ENCODE measurements at regions of chr1 and their contacts with region 1.

Region 1: DNA sequence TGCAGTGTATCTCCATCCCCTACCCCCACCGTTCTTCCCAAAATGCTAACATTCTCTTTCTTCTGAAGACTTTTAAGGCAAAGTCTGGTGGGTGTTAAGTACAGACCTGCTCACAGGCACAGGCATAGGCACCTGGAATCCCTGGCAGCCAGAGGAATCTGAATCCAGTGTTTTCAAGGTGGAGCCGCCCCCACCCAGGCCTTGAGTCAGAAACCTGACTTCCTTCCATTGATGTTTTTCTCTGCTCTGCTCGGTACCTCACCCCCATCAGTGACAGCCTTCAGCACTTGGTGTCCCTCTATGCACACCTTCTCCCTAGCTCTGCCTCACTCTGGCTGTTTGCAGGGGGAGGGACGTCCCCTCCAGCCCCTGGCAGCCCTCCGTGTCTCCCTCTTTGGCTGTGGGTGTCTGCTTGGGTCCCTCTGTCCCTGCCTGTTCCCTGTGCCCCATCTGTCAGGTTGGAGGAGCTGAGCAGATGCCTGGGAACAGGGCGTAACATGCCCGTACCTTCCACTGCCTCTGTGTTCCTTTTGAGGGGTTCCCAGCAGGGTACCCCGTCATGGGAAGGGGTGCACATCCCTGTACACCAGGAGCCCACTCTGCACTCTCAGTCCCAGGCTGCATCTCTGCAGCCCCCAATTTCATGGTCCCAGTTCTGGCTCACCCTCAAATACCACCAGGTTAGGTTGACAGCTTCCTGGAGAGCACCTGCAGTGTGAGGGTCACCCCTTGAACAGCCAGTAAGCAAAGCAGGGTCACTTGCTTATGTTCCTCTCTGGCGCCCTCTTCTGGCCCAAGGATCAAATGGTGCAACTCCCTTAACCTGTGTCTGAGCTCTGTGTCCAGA is 6.7 kb downstream of the NCDN start:
- DNase-seq: peak; percentile 61 to 87 (median 83)
- ATAC-seq: peak; percentile 74
- H3K4me3 ChIP-seq: no peak overlapping the region
- H3K4me3 Mint-ChIP-seq: no peak overlapping the region
- H3K27ac ChIP-seq: no peak overlapping the region
- H3K27ac Mint-ChIP-seq: no peak overlapping the region
- H3K4me1 ChIP-seq: no peaks in the 10 kb centered on the region
- H3K4me1 Mint-ChIP-seq: peaks cover 32% of the 10 kb centered on the region
- H3K27me3 ChIP-seq: no peaks in the 10 kb centered on the region
- H3K27me3 Mint-ChIP-seq: no peaks in the 10 kb centered on the region
- CTCF ChIP-seq: peak; percentile 72

Region 2: GRCh38 chr1:35544978-35545377 is 19.3 kb before region 1 on chr1:
- CTCF ChIA-PET with region 1: interaction called, 12 read pairs
- POLR2A ChIA-PET with region 1: no interaction called
- intact Hi-C with region 1: no loop called
- DNase-seq: peak in 7 of 9 experiments; percentile 37 to 83 (median 70)
- ATAC-seq: peak; percentile 88
- H3K4me3 ChIP-seq: no peak overlapping the region
- H3K4me3 Mint-ChIP-seq: no peak overlapping the region
- H3K27ac ChIP-seq: no peak overlapping the region
- H3K27ac Mint-ChIP-seq: peak overlapping the region; percentile 20
- H3K4me1 ChIP-seq: peaks cover 35% of the 10 kb centered on the region
- H3K4me1 Mint-ChIP-seq: peaks cover 77% of the 10 kb centered on the region
- H3K27me3 ChIP-seq: no peaks in the 10 kb centered on the region
- H3K27me3 Mint-ChIP-seq: no peaks in the 10 kb centered on the region
- CTCF ChIP-seq: peak; percentile 57

Region 3: GRCh38 chr1:35585281-35585680 is 21.0 kb after region 1 on chr1:
- CTCF ChIA-PET with region 1: interaction called, 11 read pairs
- POLR2A ChIA-PET with region 1: no interaction called
- intact Hi-C with region 1: no loop called
- DNase-seq: no peak
- ATAC-seq: no peak
- H3K4me3 ChIP-seq: no peak overlapping the region
- H3K4me3 Mint-ChIP-seq: no peak overlapping the region
- H3K27ac ChIP-seq: no peak overlapping the region
- H3K27ac Mint-ChIP-seq: no peak overlapping the region
- H3K4me1 ChIP-seq: no peaks in the 10 kb centered on the region
- H3K4me1 Mint-ChIP-seq: no peaks in the 10 kb centered on the region
- H3K27me3 ChIP-seq: no peaks in the 10 kb centered on the region
- H3K27me3 Mint-ChIP-seq: no peaks in the 10 kb centered on the region
- CTCF ChIP-seq: no peak

Region 4: GRCh38 chr1:35715568-35716002 is 151.3 kb after region 1 on chr1:
- CTCF ChIA-PET with region 1: interaction called, 136 read pairs
- POLR2A ChIA-PET with region 1: interaction called, 4 read pairs
- intact Hi-C with region 1: loop called (anchors 1 kb)
- DNase-seq: peak; percentile 57 to 85 (median 79)
- ATAC-seq: peak; percentile 63
- H3K4me3 ChIP-seq: no peak overlapping the region
- H3K4me3 Mint-ChIP-seq: peak overlapping the region; percentile 24
- H3K27ac ChIP-seq: no peak overlapping the region
- H3K27ac Mint-ChIP-seq: no peak overlapping the region
- H3K4me1 ChIP-seq: peaks cover 10% of the 10 kb centered on the region
- H3K4me1 Mint-ChIP-seq: peaks cover 30% of the 10 kb centered on the region
- H3K27me3 ChIP-seq: no peaks in the 10 kb centered on the region
- H3K27me3 Mint-ChIP-seq: no peaks in the 10 kb centered on the region
- CTCF ChIP-seq: peak; percentile 89

Region 5: DNA sequence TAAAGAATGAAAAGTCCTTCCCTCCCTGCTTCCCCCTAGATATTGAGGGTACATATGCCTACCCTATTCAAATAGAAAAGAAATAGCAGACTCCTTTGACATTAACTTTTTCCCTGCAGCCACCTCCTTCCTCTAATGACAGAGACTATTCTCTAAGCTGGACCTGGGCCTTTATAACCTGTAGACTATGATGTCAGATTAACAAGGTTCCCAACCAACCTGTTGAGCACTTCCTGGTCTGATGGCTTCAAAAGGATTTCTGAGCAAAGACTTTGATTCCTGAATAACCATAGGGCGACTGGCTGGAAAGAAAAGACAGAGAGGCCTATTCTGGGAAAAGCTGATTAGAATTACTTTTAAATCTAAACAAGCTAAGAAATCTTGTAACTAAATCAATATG is 172.9 kb after region 1 on chr1:
- CTCF ChIA-PET with region 1: interaction called, 10 read pairs
- POLR2A ChIA-PET with region 1: no interaction called
- intact Hi-C with region 1: no loop called
- DNase-seq: no peak
- ATAC-seq: no peak
- H3K4me3 ChIP-seq: no peak overlapping the region
- H3K4me3 Mint-ChIP-seq: no peak overlapping the region
- H3K27ac ChIP-seq: no peak overlapping the region
- H3K27ac Mint-ChIP-seq: no peak overlapping the region
- H3K4me1 ChIP-seq: no peaks in the 10 kb centered on the region
- H3K4me1 Mint-ChIP-seq: no peaks in the 10 kb centered on the region
- H3K27me3 ChIP-seq: no peaks in the 10 kb centered on the region
- H3K27me3 Mint-ChIP-seq: no peaks in the 10 kb centered on the region
- CTCF ChIP-seq: no peak

Region 6: DNA sequence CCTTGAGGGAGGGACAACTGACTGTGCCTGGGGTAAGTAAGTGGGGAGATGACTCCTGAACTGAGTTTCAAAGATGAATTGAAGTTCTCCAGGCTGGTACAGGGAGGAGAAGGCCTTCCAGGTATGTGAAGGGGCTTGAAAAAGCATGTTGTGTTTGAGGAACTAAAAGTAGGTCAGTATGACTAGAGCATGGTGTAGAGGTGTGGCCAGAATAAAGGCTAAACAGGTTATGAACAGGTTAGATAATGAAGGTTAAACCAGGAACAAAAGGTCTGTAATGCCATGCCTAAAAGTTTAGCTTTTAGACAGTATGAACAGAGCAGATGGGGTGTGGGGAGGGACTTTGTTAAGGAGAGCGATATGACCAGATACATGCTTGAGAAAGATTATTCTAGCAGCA is 212.8 kb after region 1 on chr1:
- CTCF ChIA-PET with region 1: interaction called, 23 read pairs
- POLR2A ChIA-PET with region 1: no interaction called
- intact Hi-C with region 1: loop called (anchors 1 kb)
- DNase-seq: no peak
- ATAC-seq: no peak
- H3K4me3 ChIP-seq: no peak overlapping the region
- H3K4me3 Mint-ChIP-seq: no peak overlapping the region
- H3K27ac ChIP-seq: no peak overlapping the region
- H3K27ac Mint-ChIP-seq: peak overlapping the region; percentile 8
- H3K4me1 ChIP-seq: peaks cover 5% of the 10 kb centered on the region
- H3K4me1 Mint-ChIP-seq: peaks cover 8% of the 10 kb centered on the region
- H3K27me3 ChIP-seq: no peaks in the 10 kb centered on the region
- H3K27me3 Mint-ChIP-seq: no peaks in the 10 kb centered on the region
- CTCF ChIP-seq: no peak